ENCODE measurements at regions of chr1 and their contacts with region 1.

Region 1: GRCh38 chr1:78617615-78618026 is 2.6 kb upstream of the IFI44L start:
- DNase-seq: peak; percentile 31 to 80
- ATAC-seq: peak; percentile 77 to 92 (median 79)
- H3K4me3 ChIP-seq: peak overlapping the region in 4 of 10 donors; percentile 9 to 21 (median 13)
- H3K27ac ChIP-seq: peak overlapping the region in 1 of 10 donors; percentile 89
- H3K4me1 ChIP-seq: peaks cover 0 to 43% (median 11%) of the 10 kb centered on the region in 9 donors
- H3K27me3 ChIP-seq: no peaks in the 10 kb centered on the region
- CTCF ChIP-seq: peak; percentile 69 to 93 (median 86)

Region 2: DNA sequence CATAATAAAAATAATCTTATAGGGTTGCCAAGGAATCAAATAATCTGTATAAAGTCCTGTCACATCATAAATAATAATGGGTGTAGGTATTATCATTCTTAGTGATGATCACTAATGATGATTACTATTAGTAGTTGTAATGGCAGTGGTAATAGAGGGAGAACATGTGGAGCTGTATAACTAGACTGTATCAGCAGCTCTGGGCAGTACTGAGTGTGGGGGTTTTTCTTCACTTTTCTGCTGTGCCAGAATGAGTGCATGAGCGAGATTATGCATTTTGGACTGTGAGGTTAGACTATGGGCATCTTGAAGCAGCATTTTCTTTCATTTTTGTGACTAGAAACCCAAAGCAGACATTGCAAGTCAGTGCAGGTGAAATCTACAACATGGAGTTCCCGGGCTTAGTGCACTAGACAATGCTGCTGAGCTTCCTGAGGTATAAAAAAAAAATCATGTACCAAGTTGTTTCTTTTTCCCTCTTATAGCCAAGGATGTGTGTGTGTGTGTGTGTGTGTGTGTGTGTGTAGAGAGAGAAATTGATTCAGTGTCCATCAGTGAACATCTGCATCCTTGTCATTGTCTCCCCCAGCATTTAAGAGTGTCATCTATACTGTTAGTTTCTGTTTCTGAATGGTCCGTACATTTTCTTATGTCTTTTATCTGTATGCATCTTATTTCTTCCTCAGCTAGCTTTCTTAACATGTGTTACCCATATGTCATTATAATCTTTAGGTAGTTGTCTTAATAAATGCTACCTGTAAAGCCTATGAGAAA is 485.3 kb before region 1 on chr1:
- intact Hi-C with region 1: loop called in 1 of 10 experiments (anchors 10 kb)
- DNase-seq: no peak
- ATAC-seq: no peak
- H3K4me3 ChIP-seq: no peak overlapping the region
- H3K27ac ChIP-seq: no peak overlapping the region
- H3K4me1 ChIP-seq: no peaks in the 10 kb centered on the region
- H3K27me3 ChIP-seq: no peaks in the 10 kb centered on the region
- CTCF ChIP-seq: no peak

Region 3: GRCh38 chr1:78649628-78650027 is 32.0 kb after region 1 on chr1 and contains the start of gene IFI44:
- intact Hi-C with region 1: loop called in 5 of 10 experiments (anchors 2 to 5 kb)
- DNase-seq: peak; percentile 72 to 92
- ATAC-seq: peak; percentile 69 to 96 (median 92)
- H3K4me3 ChIP-seq: peak within 1 kb of the TSS; percentile 4 to 65 (median 49)
- H3K27ac ChIP-seq: peak within 1 kb of the TSS in 9 of 10 donors; percentile 36 to 88 (median 74)
- H3K4me1 ChIP-seq: peaks cover 0 to 49% (median 27%) of the 10 kb centered on the region in 9 donors
- H3K27me3 ChIP-seq: no peaks in the 10 kb centered on the region
- CTCF ChIP-seq: no peak
- total RNA-seq, gene IFI44: 6.4 to 23.7 (median 11.6) TPM

Region 4: GRCh38 chr1:78676347-78676982 is 58.8 kb after region 1 on chr1:
- intact Hi-C with region 1: loop called (anchors 1 to 10 kb)
- DNase-seq: peak in 1 of 2 donors; percentile 64
- ATAC-seq: peak in 1 of 8 donors; percentile 64
- H3K4me3 ChIP-seq: no peak overlapping the region
- H3K27ac ChIP-seq: no peak overlapping the region
- H3K4me1 ChIP-seq: no peaks in the 10 kb centered on the region
- H3K27me3 ChIP-seq: no peaks in the 10 kb centered on the region
- CTCF ChIP-seq: peak; percentile 80 to 93 (median 86)